MCF 10A (cell line): ENCODE measurements at regions of chr1 and their contacts with region 1.

Region 1: DNA sequence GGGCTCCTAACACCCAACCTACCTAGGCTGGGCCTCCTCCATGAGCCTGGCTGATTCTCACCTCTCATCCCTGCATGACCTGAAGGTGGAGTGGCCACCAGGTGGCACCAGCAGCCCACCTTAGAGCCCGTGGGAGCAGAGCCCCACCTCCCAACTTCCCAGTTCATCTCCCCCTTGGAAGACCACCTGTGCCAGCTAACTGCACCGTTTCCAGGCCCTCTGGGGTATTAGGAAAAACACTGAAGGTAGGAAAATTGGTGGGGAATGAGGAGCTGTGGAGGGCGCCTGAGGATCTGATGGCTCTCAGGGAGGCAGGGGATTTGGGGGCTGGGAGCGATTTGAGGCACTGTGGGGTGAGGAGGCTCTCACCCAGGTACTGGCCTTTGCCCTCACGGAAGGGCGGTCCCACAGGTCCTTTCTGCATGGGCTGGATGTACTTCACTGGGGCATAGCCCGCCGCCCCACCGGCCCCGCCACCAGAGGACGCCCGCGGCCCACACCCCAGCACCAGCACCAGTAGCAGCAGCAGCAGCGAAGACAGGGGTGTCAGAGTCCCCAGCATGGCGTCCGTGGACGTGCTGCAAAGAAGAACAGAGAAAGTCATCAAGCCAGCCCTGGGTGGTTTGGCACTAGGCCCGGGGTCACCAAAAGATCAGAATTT is 11.1 kb downstream of the ADPRS start:
- DNase-seq: peak; percentile 77
- H3K4me3 Mint-ChIP-seq: no peak overlapping the region
- H3K27ac Mint-ChIP-seq: no peak overlapping the region
- H3K4me1 Mint-ChIP-seq: no peaks in the 10 kb centered on the region
- H3K27me3 Mint-ChIP-seq: no peaks in the 10 kb centered on the region
- CTCF ChIP-seq: peak; percentile 77

Region 2: DNA sequence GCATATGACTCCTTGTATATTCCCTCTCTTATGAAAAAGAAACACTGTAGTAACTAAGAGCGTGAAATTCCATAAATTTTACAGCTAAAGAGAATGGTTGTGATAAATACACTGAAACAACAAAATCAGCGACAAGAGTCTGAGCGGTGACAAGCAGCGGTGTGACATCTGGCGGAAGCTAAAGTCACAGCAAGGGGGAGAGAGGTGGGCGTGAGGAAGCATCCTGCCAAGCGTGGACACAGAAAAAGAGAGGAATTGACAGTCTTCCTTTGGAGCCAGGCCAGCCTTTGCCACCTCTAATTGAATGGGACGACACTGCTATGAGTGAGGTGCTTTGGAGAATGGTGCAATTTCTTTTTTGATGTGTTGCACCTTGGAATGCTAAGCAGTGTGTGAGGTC is 484.4 kb before region 1 on chr1:
- CTCF ChIA-PET with region 1: no interaction called
- POLR2A ChIA-PET with region 1: no interaction called
- intact Hi-C with region 1: no loop called
- DNase-seq: no peak
- H3K4me3 Mint-ChIP-seq: no peak overlapping the region
- H3K27ac Mint-ChIP-seq: no peak overlapping the region
- H3K4me1 Mint-ChIP-seq: peaks cover 7% of the 10 kb centered on the region
- H3K27me3 Mint-ChIP-seq: no peaks in the 10 kb centered on the region
- CTCF ChIP-seq: no peak

Region 3: DNA sequence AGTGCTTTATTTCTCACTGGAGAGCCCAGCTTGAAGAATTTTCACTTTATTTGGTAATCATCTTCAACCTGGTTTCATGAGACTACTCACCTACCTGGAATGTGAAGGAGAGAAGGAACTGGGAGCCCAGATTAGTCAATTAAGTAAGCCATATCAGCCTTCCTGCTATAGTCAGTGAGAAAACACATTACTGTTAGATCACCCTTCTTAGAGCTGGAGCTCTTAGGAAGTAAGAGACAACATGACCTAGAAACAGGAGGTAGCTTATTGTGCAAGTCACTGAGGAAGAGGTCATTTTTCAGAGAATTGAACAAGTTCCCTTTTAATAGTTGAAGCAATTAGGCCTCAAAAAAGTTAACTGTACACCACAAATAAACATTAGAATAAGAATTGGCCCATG is 65.1 kb before region 1 on chr1:
- CTCF ChIA-PET with region 1: no interaction called
- POLR2A ChIA-PET with region 1: no interaction called
- intact Hi-C with region 1: no loop called
- DNase-seq: peak; percentile 67
- H3K4me3 Mint-ChIP-seq: no peak overlapping the region
- H3K27ac Mint-ChIP-seq: peak overlapping the region; percentile 81
- H3K4me1 Mint-ChIP-seq: peaks cover 7% of the 10 kb centered on the region
- H3K27me3 Mint-ChIP-seq: no peaks in the 10 kb centered on the region
- CTCF ChIP-seq: no peak

Region 4: GRCh38 chr1:36134505-36135329 is 34.9 kb after region 1 on chr1:
- CTCF ChIA-PET with region 1: interaction called, 11 read pairs
- POLR2A ChIA-PET with region 1: interaction called, 4 read pairs
- intact Hi-C with region 1: loop called (anchors 2 kb)
- DNase-seq: peak; percentile 57
- H3K4me3 Mint-ChIP-seq: no peak overlapping the region
- H3K27ac Mint-ChIP-seq: peak overlapping the region; percentile 79
- H3K4me1 Mint-ChIP-seq: peaks cover 21% of the 10 kb centered on the region
- H3K27me3 Mint-ChIP-seq: no peaks in the 10 kb centered on the region
- CTCF ChIP-seq: peak; percentile 42

Region 5: GRCh38 chr1:36420836-36421664 is 321.2 kb after region 1 on chr1:
- CTCF ChIA-PET with region 1: no interaction called
- POLR2A ChIA-PET with region 1: no interaction called
- intact Hi-C with region 1: loop called (anchors 1 kb)
- DNase-seq: peak; percentile 83
- H3K4me3 Mint-ChIP-seq: no peak overlapping the region
- H3K27ac Mint-ChIP-seq: peak overlapping the region; percentile 76
- H3K4me1 Mint-ChIP-seq: peaks cover 14% of the 10 kb centered on the region
- H3K27me3 Mint-ChIP-seq: no peaks in the 10 kb centered on the region
- CTCF ChIP-seq: peak; percentile 96